CD4-positive, alpha-beta memory T cell (primary cell): ENCODE measurements at regions of chr3 and their contacts with region 1.

Region 1: GRCh38 chr3:14203521-14204079 is 25.0 kb downstream of the LSM3 start:
- DNase-seq: peak in 4 of 5 donors; percentile 31 to 43 (median 35)
- H3K4me3 ChIP-seq: no peak overlapping the region
- H3K4me3 Mint-ChIP-seq: no peak overlapping the region
- H3K27ac ChIP-seq: no peak overlapping the region
- H3K27ac Mint-ChIP-seq: peak overlapping the region in 1 of 7 donors; percentile 56
- H3K4me1 ChIP-seq: no peaks in the 10 kb centered on the region
- H3K4me1 Mint-ChIP-seq: peaks cover 3 to 6% (median 5%) of the 10 kb centered on the region in 4 donors
- H3K27me3 ChIP-seq: no peaks in the 10 kb centered on the region
- H3K27me3 Mint-ChIP-seq: no peaks in the 10 kb centered on the region

Region 2: GRCh38 chr3:14118400-14119381 is 84.9 kb before region 1 on chr3:
- CTCF ChIA-PET with region 1: interaction called, 17 read pairs
- POLR2A ChIA-PET with region 1: no interaction called
- intact Hi-C with region 1: no loop called
- DNase-seq: no peak
- H3K4me3 ChIP-seq: no peak overlapping the region
- H3K4me3 Mint-ChIP-seq: no peak overlapping the region
- H3K27ac ChIP-seq: no peak overlapping the region
- H3K27ac Mint-ChIP-seq: no peak overlapping the region
- H3K4me1 ChIP-seq: peaks cover 8% of the 10 kb centered on the region
- H3K4me1 Mint-ChIP-seq: peaks cover 10 to 24% (median 16%) of the 10 kb centered on the region in 4 donors
- H3K27me3 ChIP-seq: no peaks in the 10 kb centered on the region
- H3K27me3 Mint-ChIP-seq: no peaks in the 10 kb centered on the region

Region 3: DNA sequence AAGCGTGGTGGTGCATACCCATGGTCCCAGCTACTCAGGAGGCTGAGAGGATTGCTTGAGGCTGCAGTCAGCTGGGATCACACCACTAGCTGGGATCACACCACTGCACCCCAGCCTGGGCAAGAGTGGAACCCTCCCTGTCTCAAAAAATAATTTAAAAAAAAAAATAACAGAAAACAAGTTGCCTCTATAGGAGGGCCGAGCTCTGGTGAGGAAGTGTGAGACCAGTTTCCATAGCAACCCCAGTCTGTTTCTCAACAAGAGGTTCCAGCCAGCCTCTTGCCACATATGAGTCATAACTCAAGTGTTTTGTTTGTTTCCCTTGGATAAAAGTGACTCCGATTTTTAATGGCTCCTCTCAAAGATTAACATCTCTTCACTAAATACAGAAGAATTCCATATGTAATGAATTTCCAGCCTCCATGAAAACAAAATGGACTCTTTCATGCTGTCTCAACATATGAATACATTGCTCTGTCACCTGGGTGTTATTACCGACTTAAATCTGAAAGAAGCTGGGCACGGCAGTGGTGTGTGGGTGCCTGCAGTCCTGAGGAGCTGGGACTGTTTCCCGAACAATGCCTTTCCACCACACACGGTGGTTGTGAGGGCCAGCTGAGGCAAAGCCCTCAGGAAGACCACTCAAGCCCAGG is 59.1 kb before region 1 on chr3:
- CTCF ChIA-PET with region 1: interaction called, 10 read pairs
- POLR2A ChIA-PET with region 1: interaction called, 3 read pairs
- intact Hi-C with region 1: no loop called
- DNase-seq: peak; percentile 87 to 96 (median 93)
- H3K4me3 ChIP-seq: peak overlapping the region in 1 of 2 donors; percentile 29
- H3K4me3 Mint-ChIP-seq: peak overlapping the region; percentile 73 to 89 (median 82)
- H3K27ac ChIP-seq: peak overlapping the region; percentile 95
- H3K27ac Mint-ChIP-seq: peak overlapping the region; percentile 95 to 100 (median 100)
- H3K4me1 ChIP-seq: peaks cover 67% of the 10 kb centered on the region
- H3K4me1 Mint-ChIP-seq: peaks cover 45 to 72% (median 60%) of the 10 kb centered on the region in 4 donors
- H3K27me3 ChIP-seq: no peaks in the 10 kb centered on the region
- H3K27me3 Mint-ChIP-seq: no peaks in the 10 kb centered on the region

Region 4: GRCh38 chr3:14188041-14188754 is 15.4 kb before region 1 on chr3:
- CTCF ChIA-PET with region 1: interaction called, 10 read pairs
- POLR2A ChIA-PET with region 1: no interaction called
- intact Hi-C with region 1: no loop called
- DNase-seq: no peak
- H3K4me3 ChIP-seq: no peak overlapping the region
- H3K4me3 Mint-ChIP-seq: peak overlapping the region in 1 of 8 donors; percentile 22
- H3K27ac ChIP-seq: no peak overlapping the region
- H3K27ac Mint-ChIP-seq: peak overlapping the region in 1 of 7 donors; percentile 19
- H3K4me1 ChIP-seq: no peaks in the 10 kb centered on the region
- H3K4me1 Mint-ChIP-seq: peaks cover 50 to 68% (median 58%) of the 10 kb centered on the region in 4 donors
- H3K27me3 ChIP-seq: no peaks in the 10 kb centered on the region
- H3K27me3 Mint-ChIP-seq: no peaks in the 10 kb centered on the region

Region 5: GRCh38 chr3:14216257-14217048 is 12.9 kb after region 1 on chr3:
- CTCF ChIA-PET with region 1: interaction called, 75 read pairs
- POLR2A ChIA-PET with region 1: no interaction called
- intact Hi-C with region 1: no loop called
- DNase-seq: peak in 2 of 5 donors; percentile 17 to 73
- H3K4me3 ChIP-seq: peak overlapping the region; percentile 15 to 62
- H3K4me3 Mint-ChIP-seq: peak overlapping the region in 6 of 8 donors; percentile 59 to 98 (median 76)
- H3K27ac ChIP-seq: peak overlapping the region; percentile 6
- H3K27ac Mint-ChIP-seq: peak overlapping the region in 3 of 7 donors; percentile 23 to 96 (median 57)
- H3K4me1 ChIP-seq: no peaks in the 10 kb centered on the region
- H3K4me1 Mint-ChIP-seq: peaks cover 0 to 18% (median 0%) of the 10 kb centered on the region in 4 donors
- H3K27me3 ChIP-seq: no peaks in the 10 kb centered on the region
- H3K27me3 Mint-ChIP-seq: peaks cover 3% of the 10 kb centered on the region in 2 donors

Region 6: DNA sequence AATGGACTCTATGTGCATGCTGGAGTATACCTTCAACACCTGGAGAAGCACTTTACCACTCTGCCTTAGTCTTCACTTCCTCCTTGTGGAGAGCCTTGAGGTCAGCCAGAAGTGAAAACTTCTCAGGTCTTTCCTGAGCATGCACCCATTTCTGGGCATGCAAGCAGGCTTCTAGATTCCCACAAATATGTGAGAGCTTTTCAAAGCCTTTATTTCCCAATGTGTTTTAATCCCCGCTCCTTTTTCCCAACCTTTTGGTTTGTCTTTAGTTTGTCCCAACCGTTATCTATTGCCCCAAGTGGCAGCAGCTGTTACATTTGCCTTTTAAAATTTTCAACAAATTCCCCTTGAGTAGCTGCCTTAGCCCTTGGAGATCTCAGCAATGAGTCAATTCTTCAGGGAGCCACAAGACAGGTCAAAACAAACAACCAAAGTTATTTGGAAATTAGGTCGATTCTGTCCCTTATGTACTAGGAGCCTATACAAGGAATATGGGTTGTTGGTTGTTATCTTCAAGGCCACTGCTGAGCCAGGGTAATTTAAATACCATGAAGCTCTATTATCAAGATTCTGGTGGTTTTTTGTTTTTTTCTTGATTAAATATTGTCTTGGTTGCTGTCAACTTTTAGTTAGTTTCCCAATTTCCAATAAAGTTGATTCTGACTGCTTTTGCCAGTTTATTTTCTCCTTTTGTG is 19.4 kb after region 1 on chr3:
- CTCF ChIA-PET with region 1: interaction called, 75 read pairs
- POLR2A ChIA-PET with region 1: no interaction called
- intact Hi-C with region 1: no loop called
- DNase-seq: no peak
- H3K4me3 ChIP-seq: no peak overlapping the region
- H3K4me3 Mint-ChIP-seq: no peak overlapping the region
- H3K27ac ChIP-seq: no peak overlapping the region
- H3K27ac Mint-ChIP-seq: no peak overlapping the region
- H3K4me1 ChIP-seq: no peaks in the 10 kb centered on the region
- H3K4me1 Mint-ChIP-seq: peaks cover 0 to 3% (median 0%) of the 10 kb centered on the region in 4 donors
- H3K27me3 ChIP-seq: no peaks in the 10 kb centered on the region
- H3K27me3 Mint-ChIP-seq: peaks cover 27 to 32% of the 10 kb centered on the region in 2 donors

Region 7: GRCh38 chr3:14467814-14468620 is 264.4 kb after region 1 on chr3:
- CTCF ChIA-PET with region 1: interaction called, 25 read pairs
- POLR2A ChIA-PET with region 1: no interaction called
- intact Hi-C with region 1: loop called (anchors 1 kb)
- DNase-seq: peak in 4 of 5 donors; percentile 26 to 42 (median 36)
- H3K4me3 ChIP-seq: no peak overlapping the region
- H3K4me3 Mint-ChIP-seq: no peak overlapping the region
- H3K27ac ChIP-seq: no peak overlapping the region
- H3K27ac Mint-ChIP-seq: peak overlapping the region in 4 of 7 donors; percentile 36 to 81 (median 54)
- H3K4me1 ChIP-seq: no peaks in the 10 kb centered on the region
- H3K4me1 Mint-ChIP-seq: peaks cover 0 to 2% (median 0%) of the 10 kb centered on the region in 4 donors
- H3K27me3 ChIP-seq: no peaks in the 10 kb centered on the region
- H3K27me3 Mint-ChIP-seq: no peaks in the 10 kb centered on the region